GM12878 (cell line): ENCODE measurements at regions of chr4 and their contacts with region 1.

Region 1: GRCh38 chr4:70613306-70614183 is 15.0 kb upstream of the ENAM start:
- DNase-seq: no peak
- ATAC-seq: peak; percentile 58
- H3K4me3 ChIP-seq: no peak overlapping the region
- H3K27ac ChIP-seq: no peak overlapping the region
- H3K4me1 ChIP-seq: no peaks in the 10 kb centered on the region
- H3K27me3 ChIP-seq: peaks cover 0 to 14% of the 10 kb centered on the region in 2 experiments; a peak in 1 of 4 replicates
- CTCF ChIP-seq: no peak
- EP300 ChIP-seq: no peak
- POLR2A ChIP-seq: no peak
- RAD21 ChIP-seq: no peak

Region 2: DNA sequence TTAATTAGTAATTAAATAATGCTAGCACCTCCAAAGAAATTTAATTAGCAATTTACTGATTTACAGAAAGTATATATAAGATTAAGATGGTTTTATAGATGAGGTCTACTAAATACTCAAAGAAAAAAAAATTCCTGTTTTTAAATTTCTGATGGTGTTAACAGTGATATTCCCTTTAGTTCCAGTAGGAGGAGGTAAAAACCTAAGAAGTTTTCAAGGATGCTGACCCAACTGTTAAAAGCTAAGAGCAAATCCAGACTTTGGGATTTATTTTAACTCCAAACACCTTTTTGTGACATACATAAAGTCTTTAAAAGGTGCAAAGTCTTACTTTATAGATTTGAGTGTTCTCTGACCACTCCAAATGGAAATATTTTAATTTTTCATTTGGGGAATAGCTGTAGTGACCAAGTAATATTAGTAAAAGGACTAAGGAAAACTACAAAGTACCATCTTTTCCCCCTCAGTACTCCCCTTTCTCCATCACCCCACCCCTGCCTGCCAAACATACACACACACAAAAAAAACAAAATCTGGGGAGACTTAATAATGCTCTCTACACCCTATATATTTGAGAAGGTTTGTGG is 716.9 kb before region 1 on chr4:
- CTCF ChIA-PET with region 1: no interaction called
- POLR2A ChIA-PET with region 1: no interaction called
- RAD21 ChIA-PET with region 1: no interaction called
- SMC1A ChIA-PET with region 1: no interaction called
- in situ Hi-C with region 1: no loop called
- intact Hi-C with region 1: no loop called
- DNase-seq: no peak
- ATAC-seq: no peak
- H3K4me3 ChIP-seq: no peak overlapping the region
- H3K27ac ChIP-seq: no peak overlapping the region
- H3K4me1 ChIP-seq: no peaks in the 10 kb centered on the region
- H3K27me3 ChIP-seq: no peaks in the 10 kb centered on the region
- CTCF ChIP-seq: peak; percentile 19 to 44 (median 34); a peak in 3 of 6 replicates
- EP300 ChIP-seq: no peak
- POLR2A ChIP-seq: no peak
- RAD21 ChIP-seq: peak; percentile 68

Region 3: DNA sequence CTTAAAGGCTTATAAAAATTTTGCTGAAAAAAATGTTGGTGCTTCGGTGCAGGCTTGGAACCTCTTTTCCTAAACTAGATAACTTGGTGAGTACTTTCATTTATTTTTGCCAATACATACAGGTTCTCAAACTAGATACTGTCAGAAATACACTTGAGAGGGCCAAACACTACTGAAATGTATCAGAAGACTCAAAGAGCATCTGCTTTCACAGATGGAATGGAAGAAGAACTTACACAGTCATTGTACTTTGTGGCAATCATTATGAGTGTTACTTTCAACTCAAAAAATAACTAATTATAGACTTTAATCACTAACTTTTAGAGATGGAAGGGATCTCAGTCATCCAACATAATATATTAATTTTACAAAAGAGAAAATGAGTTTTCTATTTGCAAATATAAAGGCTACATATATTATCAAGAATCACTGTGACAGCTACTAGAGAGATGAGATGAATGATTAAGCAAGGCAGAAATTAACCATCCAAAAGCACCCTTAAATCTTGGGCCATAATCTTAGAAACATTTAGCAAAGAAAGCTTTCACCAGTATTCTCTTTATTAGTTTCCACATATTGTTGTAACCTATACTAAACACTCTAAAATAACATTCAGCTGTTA is 16.0 kb after region 1 on chr4:
- CTCF ChIA-PET with region 1: interaction called, 10 read pairs
- POLR2A ChIA-PET with region 1: interaction called, 3 read pairs
- RAD21 ChIA-PET with region 1: no interaction called
- SMC1A ChIA-PET with region 1: interaction called, 20 read pairs
- in situ Hi-C with region 1: no loop called
- intact Hi-C with region 1: no loop called
- DNase-seq: no peak
- ATAC-seq: peak; percentile 49; the same call in 2 of the 3 replicates
- H3K4me3 ChIP-seq: no peak overlapping the region
- H3K27ac ChIP-seq: no peak overlapping the region
- H3K4me1 ChIP-seq: no peaks in the 10 kb centered on the region
- H3K27me3 ChIP-seq: no peaks in the 10 kb centered on the region
- CTCF ChIP-seq: no peak
- EP300 ChIP-seq: no peak
- POLR2A ChIP-seq: no peak
- RAD21 ChIP-seq: no peak